A549 (cell line): ENCODE measurements at regions of chr9 and their contacts with region 1.

Region 1: GRCh38 chr9:35646533-35647265 is 4.0 kb downstream of the SIT1 start:
- DNase-seq: peak; percentile 90 to 95
- ATAC-seq: peak; percentile 93 to 97
- H3K4me3 ChIP-seq: peak overlapping the region; percentile 52
- H3K27ac ChIP-seq: peak overlapping the region; percentile 92 to 93
- H3K4me1 ChIP-seq: peaks cover 13% of the 10 kb centered on the region
- CTCF ChIP-seq: peak; percentile 87
- EP300 ChIP-seq: no peak
- POLR2A ChIP-seq: peak; percentile 66
- RAD21 ChIP-seq: peak; percentile 81 to 91

Region 2: GRCh38 chr9:35603987-35604577 is 42.6 kb before region 1 on chr9:
- CTCF ChIA-PET with region 1: interaction called, 11 read pairs
- POLR2A ChIA-PET with region 1: interaction called, 4 read pairs
- DNase-seq: peak; percentile 99 to 100
- ATAC-seq: peak; percentile 82 to 95
- H3K4me3 ChIP-seq: peak overlapping the region; percentile 80
- H3K27ac ChIP-seq: peak overlapping the region; percentile 86 to 95
- H3K4me1 ChIP-seq: peaks cover 11% of the 10 kb centered on the region
- CTCF ChIP-seq: peak; percentile 90
- EP300 ChIP-seq: no peak
- POLR2A ChIP-seq: peak; percentile 84
- RAD21 ChIP-seq: peak; percentile 47 to 67

Region 3: DNA sequence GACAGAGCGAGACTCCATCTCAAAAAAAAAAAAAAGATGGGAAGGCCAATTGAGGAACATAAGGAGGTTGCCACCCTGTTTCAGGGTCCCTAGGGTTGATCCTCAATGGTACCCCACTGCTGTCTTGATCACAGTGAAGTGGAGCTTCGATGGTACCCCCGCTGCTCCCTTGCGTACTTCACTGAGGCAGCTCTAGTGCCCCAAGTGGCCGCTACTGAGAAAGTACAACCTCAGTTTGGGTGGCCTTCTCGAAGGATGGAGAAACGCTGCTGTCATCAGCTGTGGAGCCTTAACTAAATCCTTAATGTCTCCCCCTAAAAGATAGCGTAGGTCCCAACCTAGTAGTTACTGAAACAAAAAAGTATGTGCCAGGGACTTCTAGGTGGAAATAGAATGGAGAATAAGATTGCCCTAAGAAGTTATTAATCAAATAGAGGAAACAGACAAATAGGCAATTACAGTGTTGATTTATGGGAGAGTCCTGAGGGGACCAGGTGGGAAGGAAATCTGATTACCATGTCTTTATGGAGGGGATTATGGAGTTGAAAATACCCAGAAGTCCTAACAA is 35.4 kb before region 1 on chr9:
- CTCF ChIA-PET with region 1: interaction called, 30 read pairs
- POLR2A ChIA-PET with region 1: no interaction called
- DNase-seq: peak; percentile 53 to 64
- ATAC-seq: peak; percentile 74 to 87
- H3K4me3 ChIP-seq: no peak overlapping the region
- H3K27ac ChIP-seq: no peak overlapping the region
- H3K4me1 ChIP-seq: peaks cover 8% of the 10 kb centered on the region
- CTCF ChIP-seq: peak; percentile 61
- EP300 ChIP-seq: no peak
- POLR2A ChIP-seq: no peak
- RAD21 ChIP-seq: peak in 1 of 2 experiments; percentile 35; a peak in 1 of 5 replicates

Region 4: DNA sequence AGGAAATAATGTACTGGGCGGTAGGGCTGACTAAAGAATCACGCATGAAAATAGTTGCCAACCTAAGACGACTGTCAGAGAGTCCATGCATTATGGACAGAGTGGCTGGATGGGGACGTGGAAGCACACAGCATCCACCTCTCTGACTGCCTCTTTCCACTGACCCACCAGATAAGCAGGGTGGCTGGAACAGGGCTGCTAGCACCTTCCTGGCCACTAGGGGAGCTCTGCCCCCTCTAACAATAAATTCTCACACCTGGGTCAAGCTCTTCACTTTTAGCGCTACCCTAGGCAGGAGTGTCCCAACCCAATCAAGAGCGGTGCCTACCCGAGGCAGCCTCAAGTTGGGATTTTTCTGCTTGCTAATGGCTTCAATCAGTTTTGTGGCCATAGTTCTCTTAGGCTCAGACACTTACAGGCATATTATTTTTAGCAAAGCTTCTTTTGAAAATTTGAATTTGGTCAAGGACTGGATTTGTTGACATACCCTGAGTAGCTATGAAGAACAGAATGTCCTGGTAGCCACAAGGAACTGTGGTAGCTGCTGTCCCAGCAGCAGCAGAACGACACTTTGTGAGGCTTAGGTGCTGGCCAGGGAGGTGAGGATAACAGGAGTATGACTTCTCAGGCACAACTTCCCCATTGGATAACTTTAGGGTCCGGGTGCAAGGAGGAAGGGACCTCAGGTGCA is 50.0 kb after region 1 on chr9:
- CTCF ChIA-PET with region 1: interaction called, 62 read pairs
- POLR2A ChIA-PET with region 1: no interaction called
- DNase-seq: peak; percentile 66 to 80
- ATAC-seq: peak; percentile 79 to 88
- H3K4me3 ChIP-seq: no peak overlapping the region
- H3K27ac ChIP-seq: peak overlapping the region; percentile 1 to 43; a peak in 1 of 6 replicates
- H3K4me1 ChIP-seq: peaks cover 16% of the 10 kb centered on the region
- CTCF ChIP-seq: peak; percentile 74
- EP300 ChIP-seq: no peak
- POLR2A ChIP-seq: no peak
- RAD21 ChIP-seq: peak; percentile 41 to 60

Region 5: GRCh38 chr9:35748858-35749514 is 102.3 kb after region 1 on chr9 and contains the starts of genes GBA2 and RGP1:
- CTCF ChIA-PET with region 1: interaction called, 10 read pairs
- POLR2A ChIA-PET with region 1: no interaction called
- DNase-seq: peak; percentile 62 to 81
- ATAC-seq: peak; percentile 91 to 93
- H3K4me3 ChIP-seq: peak within 1 kb of the TSS; percentile 69
- H3K27ac ChIP-seq: peak within 1 kb of the TSS; percentile 84 to 99
- H3K4me1 ChIP-seq: peaks cover 30% of the 10 kb centered on the region
- CTCF ChIP-seq: no peak
- EP300 ChIP-seq: no peak
- POLR2A ChIP-seq: peak; percentile 42; the same call in 1 of the 2 replicates
- RAD21 ChIP-seq: no peak
- polyA plus RNA-seq, gene GBA2: 40.0 and 47.4 TPM in 2 replicates
- polyA plus RNA-seq, gene RGP1: 16.6 and 20.2 TPM in 2 replicates